ENCODE measurements at regions of chr9 and their contacts with region 1.

Region 1: GRCh38 chr9:37449862-37450632 is 15.2 kb downstream of the ZBTB5 start:
- DNase-seq: no peak
- H3K4me3 ChIP-seq: no peak overlapping the region
- H3K27ac ChIP-seq: no peak overlapping the region
- H3K4me1 ChIP-seq: peaks cover 0 to 3% (median 1%) of the 10 kb centered on the region in 4 experiments; a peak in 2 of 7 replicates
- H3K27me3 ChIP-seq: no peaks in the 10 kb centered on the region
- CTCF ChIP-seq: no peak
- EP300 ChIP-seq: no peak
- POLR2A ChIP-seq: no peak
- RAD21 ChIP-seq: no peak

Region 2: DNA sequence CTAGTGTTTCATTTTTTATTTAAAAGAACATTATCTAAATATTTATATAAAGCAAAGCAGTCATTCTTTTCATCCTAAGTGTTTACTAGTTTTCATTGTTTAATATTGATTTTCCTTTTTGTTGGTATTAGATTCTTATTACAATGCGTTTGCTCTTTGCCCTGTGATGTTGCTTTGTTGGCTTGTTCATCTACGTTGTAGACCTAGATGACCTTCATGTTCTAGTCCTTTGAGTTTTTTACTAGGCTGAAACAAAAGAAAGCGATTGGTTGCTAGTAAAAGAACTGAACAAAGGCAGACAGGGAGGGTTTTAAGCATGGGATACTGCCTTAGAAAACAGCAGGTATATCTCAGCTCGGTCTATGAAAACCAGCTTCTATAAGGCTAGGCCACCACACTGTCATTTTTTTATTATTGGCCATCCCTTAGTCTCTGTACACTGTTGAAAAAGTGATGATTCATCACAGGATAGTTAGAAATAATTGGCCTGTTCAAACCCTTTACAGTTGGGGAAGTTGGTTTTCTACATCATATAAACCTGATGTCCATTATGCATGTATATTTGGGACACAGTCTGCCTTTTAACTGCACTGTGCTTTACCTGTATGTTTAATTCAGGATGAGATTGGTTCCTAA is 210.7 kb before region 1 on chr9:
- CTCF ChIA-PET with region 1: no interaction called
- POLR2A ChIA-PET with region 1: no interaction called
- DNase-seq: no peak
- H3K4me3 ChIP-seq: no peak overlapping the region
- H3K27ac ChIP-seq: no peak overlapping the region
- H3K4me1 ChIP-seq: peaks cover 0 to 6% (median 4%) of the 10 kb centered on the region in 4 experiments; a peak in 5 of 7 replicates
- H3K27me3 ChIP-seq: no peaks in the 10 kb centered on the region
- CTCF ChIP-seq: no peak
- EP300 ChIP-seq: no peak
- POLR2A ChIP-seq: no peak
- RAD21 ChIP-seq: no peak

Region 3: GRCh38 chr9:37437621-37438020 is 12.4 kb before region 1 on chr9:
- CTCF ChIA-PET with region 1: no interaction called
- POLR2A ChIA-PET with region 1: interaction called, 14 read pairs
- DNase-seq: no peak
- H3K4me3 ChIP-seq: no peak overlapping the region
- H3K27ac ChIP-seq: no peak overlapping the region
- H3K4me1 ChIP-seq: peaks cover 3 to 15% (median 9%) of the 10 kb centered on the region in 4 experiments
- H3K27me3 ChIP-seq: no peaks in the 10 kb centered on the region
- CTCF ChIP-seq: no peak
- EP300 ChIP-seq: no peak
- POLR2A ChIP-seq: no peak
- RAD21 ChIP-seq: no peak

Region 4: GRCh38 chr9:37465249-37466036 is 15.4 kb after region 1 on chr9 and contains the start of gene ZBTB5:
- CTCF ChIA-PET with region 1: no interaction called
- POLR2A ChIA-PET with region 1: interaction called, 18 read pairs
- DNase-seq: peak; percentile 96 to 98
- H3K4me3 ChIP-seq: peak within 1 kb of the TSS; percentile 69 to 94 (median 87)
- H3K27ac ChIP-seq: peak within 1 kb of the TSS; percentile 98
- H3K4me1 ChIP-seq: peaks cover 0 to 9% (median 4%) of the 10 kb centered on the region in 4 experiments; a peak in 2 of 7 replicates
- H3K27me3 ChIP-seq: no peaks in the 10 kb centered on the region
- CTCF ChIP-seq: no peak
- EP300 ChIP-seq: no peak
- POLR2A ChIP-seq: peak; percentile 52 to 62; a peak in 2 of 3 replicates
- RAD21 ChIP-seq: no peak
- total RNA-seq, gene ZBTB5: 13.6 and 14.5 TPM in 2 replicates

Measured in H1 (cell line).